Activated naive CD4-positive, alpha-beta T cell treated with anti-CD3 and anti-CD28 coated beads for 36 hours (primary cell): ENCODE measurements at regions of chr11 and their contacts with region 1.

Region 1: GRCh38 chr11:78094250-78094649 is 14.6 kb upstream of the NDUFC2 start:
- DNase-seq: peak; percentile 54
- H3K4me3 Mint-ChIP-seq: no peak overlapping the region
- H3K27ac Mint-ChIP-seq: peak overlapping the region; percentile 73
- H3K4me1 Mint-ChIP-seq: peaks cover 13% of the 10 kb centered on the region
- H3K27me3 Mint-ChIP-seq: no peaks in the 10 kb centered on the region

Region 2: GRCh38 chr11:78079232-78080083 is 14.8 kb before region 1 on chr11 and contains the start of gene NDUFC2:
- CTCF ChIA-PET with region 1: no interaction called
- intact Hi-C with region 1: loop called (anchors 1 kb)
- DNase-seq: peak; percentile 75
- H3K4me3 Mint-ChIP-seq: peak within 1 kb of the TSS; percentile 92
- H3K27ac Mint-ChIP-seq: peak within 1 kb of the TSS; percentile 86
- H3K4me1 Mint-ChIP-seq: peaks cover 45% of the 10 kb centered on the region
- H3K27me3 Mint-ChIP-seq: no peaks in the 10 kb centered on the region
- total RNA-seq, gene NDUFC2: 180 to 183 TPM